ENCODE measurements at regions of chr17 and their contacts with region 1.

Region 1: GRCh38 chr17:39579318-39580081 is 28.2 kb downstream of the NEUROD2 start:
- DNase-seq: peak in 1 of 2 experiments; percentile 67
- H3K4me3 ChIP-seq: peak overlapping the region in 2 of 4 experiments; percentile 5 to 31; a peak in 3 of 8 replicates
- H3K27ac ChIP-seq: no peak overlapping the region; the same call in 1 of the 2 replicates
- H3K4me1 ChIP-seq: peaks cover 13 to 22% (median 15%) of the 10 kb centered on the region in 4 experiments
- H3K27me3 ChIP-seq: peaks cover 0 to 4% (median 2%) of the 10 kb centered on the region in 4 experiments; a peak in 3 of 7 replicates
- CTCF ChIP-seq: no peak
- EP300 ChIP-seq: 0 out of 3 replicates have a peak, but pooled peaks of 1 of the 2 experiments have one; percentile 15
- POLR2A ChIP-seq: no peak
- RAD21 ChIP-seq: no peak

Region 2: DNA sequence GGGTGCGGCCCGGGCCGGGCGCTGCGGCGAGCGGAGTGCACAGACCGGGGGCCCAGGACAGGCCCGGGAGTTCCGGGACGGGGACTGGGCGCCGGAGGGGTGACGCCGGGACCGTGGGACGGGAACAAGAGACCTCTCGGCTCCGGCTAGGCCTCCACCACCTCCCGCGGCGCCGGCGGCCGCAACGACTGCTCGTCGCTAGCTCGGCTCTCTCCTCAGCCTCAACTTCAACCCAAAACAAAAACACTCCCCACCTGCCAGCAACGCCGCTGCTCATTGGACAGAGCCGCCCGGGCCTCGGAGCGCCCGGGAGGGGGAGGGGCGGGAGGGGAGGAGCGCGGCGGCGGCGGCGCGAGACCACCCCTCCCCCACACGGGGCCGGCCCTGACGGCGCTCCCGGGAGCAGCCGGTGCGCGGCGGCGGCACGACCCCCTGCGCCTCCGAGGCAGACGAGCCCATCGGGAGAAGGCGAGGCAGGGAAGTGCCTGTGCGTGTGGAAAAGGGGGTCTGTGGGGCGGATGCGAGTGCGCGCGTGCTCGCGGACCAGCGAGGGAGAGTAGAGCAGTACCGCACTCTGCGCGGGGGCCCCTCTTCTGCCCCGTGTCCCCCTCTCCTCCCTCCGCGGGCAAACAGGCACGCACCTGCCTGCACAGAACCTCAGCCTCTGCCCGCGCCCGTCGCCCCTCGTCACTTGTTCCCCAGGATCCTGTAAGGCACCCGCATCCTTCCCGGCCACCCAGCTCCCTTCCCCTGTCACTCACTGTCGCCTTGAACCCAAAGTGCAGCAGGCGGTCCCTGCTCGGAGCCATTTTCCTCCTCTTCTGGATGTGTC is 177.9 kb before region 1 on chr17 and contains the start of gene FBXL20:
- CTCF ChIA-PET with region 1: no interaction called
- POLR2A ChIA-PET with region 1: no interaction called
- DNase-seq: peak; percentile 62 to 91
- H3K4me3 ChIP-seq: peak within 1 kb of the TSS; percentile 81 to 91 (median 86)
- H3K27ac ChIP-seq: peak within 1 kb of the TSS; percentile 79; the same call in 1 of the 2 replicates
- H3K4me1 ChIP-seq: no peaks in the 10 kb centered on the region
- H3K27me3 ChIP-seq: no peaks in the 10 kb centered on the region
- CTCF ChIP-seq: no peak
- EP300 ChIP-seq: 0 out of 3 replicates have a peak, but pooled peaks of 1 of the 2 experiments have one; percentile 60
- POLR2A ChIP-seq: peak; percentile 79 to 90
- RAD21 ChIP-seq: no peak
- total RNA-seq, gene FBXL20: 10.3 and 11.0 TPM in 2 replicates

Region 3: DNA sequence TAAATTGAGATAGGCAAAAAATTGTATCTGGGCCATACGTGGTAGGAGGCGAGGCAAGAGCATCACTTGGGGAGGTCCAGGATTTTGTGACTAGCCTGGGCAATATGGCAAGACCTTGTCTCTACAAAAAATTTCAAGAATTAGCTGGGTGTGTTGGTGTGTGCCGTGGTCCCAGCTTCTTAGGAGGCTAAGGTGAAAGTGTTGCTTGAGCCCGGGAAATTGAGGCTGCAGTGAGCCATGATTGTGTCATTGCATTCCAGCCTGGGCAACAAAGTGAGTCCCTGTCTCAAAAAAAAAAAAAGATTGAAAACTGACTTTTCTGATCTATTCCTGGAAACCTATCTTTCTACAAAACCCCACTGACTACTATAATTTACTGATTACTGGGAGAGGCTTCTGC is 91.6 kb before region 1 on chr17:
- CTCF ChIA-PET with region 1: no interaction called
- POLR2A ChIA-PET with region 1: no interaction called
- DNase-seq: no peak
- H3K4me3 ChIP-seq: no peak overlapping the region
- H3K27ac ChIP-seq: no peak overlapping the region
- H3K4me1 ChIP-seq: no peaks in the 10 kb centered on the region
- H3K27me3 ChIP-seq: no peaks in the 10 kb centered on the region
- CTCF ChIP-seq: no peak
- EP300 ChIP-seq: no peak
- POLR2A ChIP-seq: no peak
- RAD21 ChIP-seq: no peak

Region 4: GRCh38 chr17:39563476-39563875 is 16.0 kb before region 1 on chr17:
- CTCF ChIA-PET with region 1: interaction called, 120 read pairs
- POLR2A ChIA-PET with region 1: interaction called, 12 read pairs
- DNase-seq: peak in 1 of 2 experiments; percentile 62
- H3K4me3 ChIP-seq: peak overlapping the region in 1 of 4 experiments; percentile 26; a peak in 3 of 8 replicates
- H3K27ac ChIP-seq: peak overlapping the region; percentile 29
- H3K4me1 ChIP-seq: peaks cover 4 to 7% (median 6%) of the 10 kb centered on the region in 4 experiments; a peak in 5 of 7 replicates
- H3K27me3 ChIP-seq: no peaks in the 10 kb centered on the region
- CTCF ChIP-seq: no peak
- EP300 ChIP-seq: no peak
- POLR2A ChIP-seq: no peak; a peak in 1 of 3 replicates
- RAD21 ChIP-seq: no peak

Region 5: GRCh38 chr17:39598047-39598481 is 18.6 kb after region 1 on chr17:
- CTCF ChIA-PET with region 1: interaction called, 15 read pairs
- POLR2A ChIA-PET with region 1: interaction called, 5 read pairs
- DNase-seq: peak in 1 of 2 experiments; percentile 52
- H3K4me3 ChIP-seq: no peak overlapping the region
- H3K27ac ChIP-seq: no peak overlapping the region
- H3K4me1 ChIP-seq: peaks cover 5 to 39% (median 30%) of the 10 kb centered on the region in 4 experiments
- H3K27me3 ChIP-seq: peaks cover 78 to 100% (median 97%) of the 10 kb centered on the region in 4 experiments
- CTCF ChIP-seq: no peak
- EP300 ChIP-seq: no peak
- POLR2A ChIP-seq: no peak
- RAD21 ChIP-seq: no peak

Region 6: GRCh38 chr17:39636927-39637736 is 57.6 kb after region 1 on chr17 and contains the start of gene STARD3:
- CTCF ChIA-PET with region 1: interaction called, 12 read pairs
- POLR2A ChIA-PET with region 1: no interaction called
- DNase-seq: peak in 1 of 2 experiments; percentile 92
- H3K4me3 ChIP-seq: peak within 1 kb of the TSS; percentile 79 to 91 (median 85)
- H3K27ac ChIP-seq: peak within 1 kb of the TSS; percentile 64; the same call in 1 of the 2 replicates
- H3K4me1 ChIP-seq: peaks cover 13 to 40% (median 26%) of the 10 kb centered on the region in 4 experiments
- H3K27me3 ChIP-seq: 0 out of 7 replicates have a peak, but pooled peaks cover 0 to 3% (median 0%) of the 10 kb centered on the region in 4 experiments
- CTCF ChIP-seq: peak in 2 of 3 experiments; percentile 18 to 32; a peak in 3 of 4 replicates
- EP300 ChIP-seq: 0 out of 3 replicates have a peak, but pooled peaks of 1 of the 2 experiments have one; percentile 22
- POLR2A ChIP-seq: peak in 1 of 2 experiments; percentile 61; a peak in 2 of 3 replicates
- RAD21 ChIP-seq: 0 out of 4 replicates have a peak, but pooled peaks of 1 of the 2 experiments have one; percentile 6
- total RNA-seq, gene STARD3: 47.6 and 56.7 TPM in 2 replicates